Activated CD4-positive, alpha-beta memory T cell treated with anti-CD3 and anti-CD28 coated beads for 36 hours (primary cell): ENCODE measurements at regions of chr14 and their contacts with region 1.

Region 1: GRCh38 chr14:73728717-73729330 is 14.6 kb upstream of the PNMA1 start:
- DNase-seq: peak; percentile 90
- H3K4me3 Mint-ChIP-seq: no peak overlapping the region
- H3K27ac Mint-ChIP-seq: peak overlapping the region; percentile 78
- H3K4me1 Mint-ChIP-seq: peaks cover 35% of the 10 kb centered on the region
- H3K27me3 Mint-ChIP-seq: no peaks in the 10 kb centered on the region

Region 2: DNA sequence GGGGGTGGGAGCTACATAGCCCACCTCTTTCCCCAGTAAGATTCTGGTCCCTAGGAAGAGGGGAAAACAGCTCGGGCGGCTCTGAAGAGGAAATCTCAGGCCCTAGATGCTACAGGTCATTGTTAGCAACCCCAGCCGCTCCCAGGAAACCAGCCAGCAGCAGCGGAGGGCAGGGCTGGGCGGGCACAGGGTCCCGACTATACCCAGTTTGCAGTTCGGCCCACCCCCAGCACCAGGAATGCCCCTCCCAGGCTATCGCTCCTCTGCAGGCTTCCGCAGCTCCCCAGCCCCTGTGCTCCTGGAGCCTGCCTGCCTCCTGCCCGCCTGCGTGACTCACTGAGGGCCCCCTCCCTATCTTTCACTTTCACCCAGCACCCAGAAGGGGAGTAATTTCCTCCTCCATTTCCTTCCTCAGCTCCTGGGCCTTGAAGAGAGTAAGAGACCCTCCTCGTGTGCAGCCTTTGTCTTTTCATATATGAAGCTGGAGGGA is 12.6 kb after region 1 on chr14:
- CTCF ChIA-PET with region 1: interaction called, 63 read pairs
- POLR2A ChIA-PET with region 1: no interaction called
- intact Hi-C with region 1: no loop called
- DNase-seq: peak; percentile 85
- H3K4me3 Mint-ChIP-seq: peak overlapping the region; percentile 43
- H3K27ac Mint-ChIP-seq: peak overlapping the region; percentile 89
- H3K4me1 Mint-ChIP-seq: peaks cover 64% of the 10 kb centered on the region
- H3K27me3 Mint-ChIP-seq: no peaks in the 10 kb centered on the region

Region 3: GRCh38 chr14:73753959-73754882 is 25.4 kb after region 1 on chr14:
- CTCF ChIA-PET with region 1: interaction called, 44 read pairs
- POLR2A ChIA-PET with region 1: interaction called, 13 read pairs
- intact Hi-C with region 1: loop called (anchors 1 kb)
- DNase-seq: peak; percentile 84
- H3K4me3 Mint-ChIP-seq: peak overlapping the region; percentile 87
- H3K27ac Mint-ChIP-seq: peak overlapping the region; percentile 95
- H3K4me1 Mint-ChIP-seq: peaks cover 86% of the 10 kb centered on the region
- H3K27me3 Mint-ChIP-seq: no peaks in the 10 kb centered on the region

Region 4: GRCh38 chr14:73777401-73777800 is 48.6 kb after region 1 on chr14:
- CTCF ChIA-PET with region 1: interaction called, 16 read pairs
- POLR2A ChIA-PET with region 1: no interaction called
- intact Hi-C with region 1: no loop called
- DNase-seq: no peak
- H3K4me3 Mint-ChIP-seq: no peak overlapping the region
- H3K27ac Mint-ChIP-seq: peak overlapping the region; percentile 13
- H3K4me1 Mint-ChIP-seq: peaks cover 58% of the 10 kb centered on the region
- H3K27me3 Mint-ChIP-seq: no peaks in the 10 kb centered on the region

Region 5: GRCh38 chr14:73816393-73816816 is 87.6 kb after region 1 on chr14:
- CTCF ChIA-PET with region 1: interaction called, 12 read pairs
- POLR2A ChIA-PET with region 1: interaction called, 3 read pairs
- intact Hi-C with region 1: no loop called
- DNase-seq: no peak
- H3K4me3 Mint-ChIP-seq: no peak overlapping the region
- H3K27ac Mint-ChIP-seq: no peak overlapping the region
- H3K4me1 Mint-ChIP-seq: peaks cover 8% of the 10 kb centered on the region
- H3K27me3 Mint-ChIP-seq: no peaks in the 10 kb centered on the region

Region 6: GRCh38 chr14:73862480-73862879 is 133.7 kb after region 1 on chr14:
- CTCF ChIA-PET with region 1: interaction called, 13 read pairs
- POLR2A ChIA-PET with region 1: no interaction called
- intact Hi-C with region 1: no loop called
- DNase-seq: no peak
- H3K4me3 Mint-ChIP-seq: no peak overlapping the region
- H3K27ac Mint-ChIP-seq: no peak overlapping the region
- H3K4me1 Mint-ChIP-seq: no peaks in the 10 kb centered on the region
- H3K27me3 Mint-ChIP-seq: no peaks in the 10 kb centered on the region

Region 7: GRCh38 chr14:74475678-74476077 is 746.9 kb after region 1 on chr14:
- CTCF ChIA-PET with region 1: no interaction called
- POLR2A ChIA-PET with region 1: no interaction called
- intact Hi-C with region 1: no loop called
- DNase-seq: no peak
- H3K4me3 Mint-ChIP-seq: no peak overlapping the region
- H3K27ac Mint-ChIP-seq: no peak overlapping the region
- H3K4me1 Mint-ChIP-seq: no peaks in the 10 kb centered on the region
- H3K27me3 Mint-ChIP-seq: no peaks in the 10 kb centered on the region